HEK293T (cell line): ENCODE measurements at regions of chr4 and their contacts with region 1.

Region 1: DNA sequence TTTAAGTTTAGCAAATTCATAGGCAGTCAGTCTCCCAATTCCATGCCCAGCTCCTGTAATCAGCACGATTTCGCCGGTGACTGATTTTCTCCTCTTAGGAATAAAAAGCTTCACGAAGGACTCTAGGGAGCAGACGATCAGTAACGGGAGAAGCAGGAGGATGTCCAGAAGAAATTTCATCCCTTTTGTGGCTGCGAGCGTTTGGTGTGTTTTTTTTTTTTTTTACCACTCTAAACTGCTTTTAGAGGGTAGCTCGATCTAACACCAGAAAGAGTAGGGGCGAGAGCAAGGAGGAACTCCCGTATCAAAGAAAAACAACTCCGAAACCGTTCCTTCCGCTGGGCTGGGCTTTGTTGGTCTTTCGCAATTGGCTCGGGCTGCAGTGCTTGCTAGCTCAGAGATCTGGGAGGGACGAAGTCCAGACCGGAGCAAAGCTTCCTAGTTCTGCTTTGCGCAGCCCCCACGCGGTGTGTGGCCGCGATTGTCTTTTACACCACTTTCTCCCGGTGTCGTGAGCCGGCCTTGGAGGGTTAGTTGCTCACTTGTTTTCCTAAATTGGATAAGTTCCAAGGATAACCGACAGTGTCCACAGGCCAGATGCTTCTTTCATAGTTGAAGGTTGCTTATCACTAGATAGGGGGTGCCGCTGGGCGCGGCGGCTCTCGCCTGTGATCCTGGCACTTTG is at the start of gene HSD17B11:
- DNase-seq: peak; percentile 88

Region 2: GRCh38 chr4:87406462-87406861 is 15.4 kb after region 1 on chr4:
- CTCF ChIA-PET with region 1: no interaction called
- POLR2A ChIA-PET with region 1: interaction called, 15 read pairs
- DNase-seq: no peak

Region 3: DNA sequence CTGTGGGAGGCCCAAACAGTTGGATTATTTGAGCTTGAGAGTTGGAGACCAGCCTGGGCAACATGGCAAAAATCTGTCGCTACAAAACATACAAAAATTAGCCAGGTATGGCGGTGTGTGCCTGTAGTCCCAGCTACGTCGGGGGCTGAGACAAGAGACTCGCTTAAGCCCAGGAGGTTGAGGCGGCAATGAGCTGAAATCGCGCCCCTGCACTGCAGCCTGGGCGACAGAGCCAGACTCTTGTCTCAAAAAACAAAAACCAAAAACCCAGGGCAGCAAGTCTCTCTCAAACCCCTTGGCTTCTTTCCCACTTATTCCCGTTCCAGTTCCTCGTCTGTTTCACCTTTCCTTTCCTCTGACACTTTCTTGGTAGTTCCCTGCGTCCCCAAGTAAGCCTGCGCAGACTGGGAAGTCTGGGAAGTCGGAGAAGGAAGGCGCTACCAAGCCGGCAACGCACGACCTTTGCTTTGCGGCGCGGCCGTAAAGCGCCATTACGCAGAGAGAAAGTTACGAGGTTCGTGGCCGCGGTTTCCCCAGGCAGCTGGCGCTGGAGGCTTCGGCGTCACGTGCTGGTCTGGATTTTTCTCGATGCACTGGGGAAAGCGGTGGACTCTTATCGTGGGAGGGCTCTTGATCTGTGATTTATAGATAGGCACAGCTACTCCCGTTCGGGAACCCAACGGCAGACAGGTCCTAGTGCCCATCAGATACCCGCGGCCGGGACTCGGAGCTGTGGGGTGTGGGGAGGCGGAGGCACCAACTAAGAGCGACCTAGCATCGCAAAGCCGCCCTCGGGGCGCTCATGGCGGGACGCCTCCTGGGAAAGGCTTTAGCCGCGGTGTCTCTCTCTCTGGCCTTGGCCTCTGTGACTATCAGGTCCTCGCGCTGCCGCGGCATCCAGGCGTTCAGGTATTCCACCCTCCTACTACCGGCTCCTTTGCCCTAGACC is 31.3 kb after region 1 on chr4 and contains the start of gene NUDT9:
- CTCF ChIA-PET with region 1: interaction called, 3 read pairs
- POLR2A ChIA-PET with region 1: interaction called, 59 read pairs
- DNase-seq: peak; percentile 88